ENCODE measurements at regions of chr3 and their contacts with region 1.

Region 1: GRCh38 chr3:195850857-195851543 is 39.3 kb upstream of the MUC4 start:
- DNase-seq: peak; percentile 79 to 86
- ATAC-seq: peak; percentile 86 to 96 (median 90)
- H3K4me3 ChIP-seq: peak overlapping the region; percentile 17
- H3K27ac ChIP-seq: no peak overlapping the region
- H3K4me1 ChIP-seq: peaks cover 8% of the 10 kb centered on the region
- H3K27me3 ChIP-seq: no peaks in the 10 kb centered on the region
- CTCF ChIP-seq: peak; percentile 100

Region 2: GRCh38 chr3:195221015-195221853 is 629.8 kb before region 1 on chr3:
- intact Hi-C with region 1: no loop called
- DNase-seq: peak in 1 of 2 donors; percentile 40
- ATAC-seq: peak in 1 of 4 donors; percentile 33
- H3K4me3 ChIP-seq: no peak overlapping the region
- H3K27ac ChIP-seq: no peak overlapping the region
- H3K4me1 ChIP-seq: peaks cover 7% of the 10 kb centered on the region
- H3K27me3 ChIP-seq: no peaks in the 10 kb centered on the region
- CTCF ChIP-seq: no peak

Region 3: DNA sequence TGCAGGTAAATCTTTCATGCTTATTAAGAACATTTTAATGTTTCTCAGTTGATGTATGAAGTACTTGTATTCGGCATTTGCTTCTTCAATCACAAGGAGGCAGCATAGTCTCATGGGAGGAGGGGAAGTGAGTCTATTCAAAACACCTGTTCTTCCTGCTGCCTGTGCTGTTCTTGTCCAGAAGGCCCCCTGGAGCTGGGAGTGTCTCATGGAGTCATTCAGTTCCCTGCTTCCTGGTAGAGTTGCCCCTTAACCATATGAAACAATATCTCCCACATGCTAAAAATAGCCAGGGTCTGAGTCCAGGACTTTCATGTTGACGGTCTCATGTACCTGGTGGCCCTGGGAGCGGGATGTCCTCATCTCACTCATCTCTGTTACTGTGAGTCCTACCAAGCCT is 292.4 kb before region 1 on chr3:
- intact Hi-C with region 1: loop called (anchors 5 to 10 kb)
- DNase-seq: peak; percentile 41 to 82
- ATAC-seq: peak; percentile 89 to 94 (median 90)
- H3K4me3 ChIP-seq: no peak overlapping the region
- H3K27ac ChIP-seq: peak overlapping the region; percentile 81
- H3K4me1 ChIP-seq: peaks cover 22% of the 10 kb centered on the region
- H3K27me3 ChIP-seq: no peaks in the 10 kb centered on the region
- CTCF ChIP-seq: peak; percentile 65

Region 4: GRCh38 chr3:195727606-195728195 is 123.3 kb before region 1 on chr3:
- intact Hi-C with region 1: no loop called
- DNase-seq: no peak
- ATAC-seq: no peak
- H3K4me3 ChIP-seq: no peak overlapping the region
- H3K27ac ChIP-seq: no peak overlapping the region
- H3K4me1 ChIP-seq: no peaks in the 10 kb centered on the region
- H3K27me3 ChIP-seq: no peaks in the 10 kb centered on the region
- CTCF ChIP-seq: no peak

Region 5: GRCh38 chr3:195805181-195805987 is 45.6 kb before region 1 on chr3:
- intact Hi-C with region 1: loop called in 1 of 2 experiments (anchors 2 kb)
- DNase-seq: no peak
- ATAC-seq: no peak
- H3K4me3 ChIP-seq: no peak overlapping the region
- H3K27ac ChIP-seq: no peak overlapping the region
- H3K4me1 ChIP-seq: no peaks in the 10 kb centered on the region
- H3K27me3 ChIP-seq: no peaks in the 10 kb centered on the region
- CTCF ChIP-seq: no peak

Region 6: DNA sequence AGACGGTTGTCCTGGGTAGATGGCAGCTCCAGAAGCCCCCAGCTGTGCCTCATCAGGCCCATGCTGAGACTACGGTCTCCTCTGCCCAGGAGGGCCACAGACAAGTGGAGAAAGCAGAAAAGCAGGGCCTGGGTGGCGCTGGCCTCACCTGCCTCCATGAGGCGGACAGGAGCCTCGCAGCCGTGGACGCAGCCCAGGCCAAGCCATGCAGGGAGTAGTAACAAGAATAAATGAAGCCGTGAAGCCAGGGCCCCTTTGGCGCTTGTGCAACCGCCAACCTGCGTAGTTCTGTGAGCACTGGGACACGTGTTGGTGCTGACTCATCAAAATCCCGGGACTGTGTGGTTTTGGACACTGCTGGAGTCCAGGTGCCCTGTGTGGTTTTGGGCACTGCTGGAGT is 27.0 kb before region 1 on chr3:
- intact Hi-C with region 1: no loop called
- DNase-seq: no peak
- ATAC-seq: no peak
- H3K4me3 ChIP-seq: no peak overlapping the region
- H3K27ac ChIP-seq: no peak overlapping the region
- H3K4me1 ChIP-seq: no peaks in the 10 kb centered on the region
- H3K27me3 ChIP-seq: no peaks in the 10 kb centered on the region
- CTCF ChIP-seq: no peak